Activated B cell treated with CpG ODN at 0.5 μM for 24 hours (primary cell): ENCODE measurements at regions of chr7 and their contacts with region 1.

Region 1: DNA sequence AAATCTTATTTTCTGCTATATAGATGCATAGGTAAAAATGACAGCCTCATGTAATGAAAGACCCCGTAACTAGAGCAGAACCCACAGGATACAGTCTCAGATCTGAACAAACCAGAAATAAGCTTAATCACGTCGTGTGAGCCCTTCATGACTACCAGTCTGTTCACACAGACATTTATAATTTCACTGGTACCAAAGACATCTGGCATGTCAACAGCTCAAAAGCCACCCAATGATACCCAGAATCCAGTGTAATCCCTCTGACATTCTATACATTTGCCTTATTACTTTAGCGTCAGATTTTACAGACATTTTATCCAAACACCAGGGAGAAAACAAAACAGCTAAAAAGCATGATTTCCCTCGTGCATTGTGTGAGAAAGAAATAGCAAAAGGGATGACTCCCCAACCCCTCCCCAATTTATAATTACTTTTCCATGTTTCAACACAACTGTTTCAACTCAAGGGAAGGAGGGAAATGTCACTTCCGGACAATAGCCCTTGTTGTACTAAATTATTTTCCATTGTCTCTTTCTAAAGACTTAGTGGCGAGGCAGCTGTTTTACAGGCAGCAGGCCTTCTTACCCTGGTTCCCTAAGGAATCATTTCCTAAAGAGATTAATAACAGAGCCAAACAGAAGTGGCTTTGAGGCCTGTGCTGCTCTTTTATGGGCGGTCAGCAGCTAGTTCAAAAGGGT is 33.2 kb downstream of the DOCK4 start:
- DNase-seq: no peak
- ATAC-seq: no peak
- H3K4me3 Mint-ChIP-seq: no peak overlapping the region
- H3K27ac Mint-ChIP-seq: no peak overlapping the region
- H3K4me1 Mint-ChIP-seq: no peaks in the 10 kb centered on the region
- H3K27me3 Mint-ChIP-seq: peaks cover 16% of the 10 kb centered on the region
- CTCF ChIP-seq: no peak

Region 2: DNA sequence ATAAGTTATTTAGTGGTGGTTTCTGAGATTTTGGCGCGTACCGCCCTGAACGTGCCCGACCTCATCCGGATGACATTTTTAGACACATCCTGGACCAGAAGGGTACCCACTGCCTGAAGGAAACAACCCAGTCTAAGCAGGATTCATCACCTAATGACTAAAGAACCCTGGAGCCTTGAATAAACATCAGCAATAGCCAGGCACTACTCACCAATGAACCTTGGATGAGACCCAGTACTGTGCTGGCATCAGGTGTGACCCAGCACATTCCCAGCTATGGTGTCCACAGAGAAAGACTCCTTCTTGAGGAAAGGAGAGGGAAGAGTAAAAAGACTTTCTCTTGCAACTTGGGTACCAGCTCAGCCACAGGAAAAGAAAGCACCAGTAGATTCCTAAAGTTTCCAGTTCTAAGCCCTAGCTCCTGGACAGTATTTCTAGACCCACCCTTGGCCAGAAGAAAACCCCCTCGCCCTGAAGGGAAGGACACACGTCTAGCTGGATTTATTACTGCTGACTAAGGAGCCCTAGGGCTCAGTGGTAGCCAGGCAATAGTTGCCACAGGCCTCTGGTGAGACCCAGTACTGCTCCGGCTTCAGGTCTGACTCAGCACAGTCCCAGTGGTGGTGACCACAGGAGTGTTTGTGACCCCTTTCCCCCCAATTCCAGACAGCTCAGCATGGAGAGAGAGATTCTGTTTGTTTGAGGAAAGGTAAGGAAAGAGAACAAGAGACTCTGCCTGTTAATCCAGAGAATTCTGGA is 66.0 kb after region 1 on chr7:
- CTCF ChIA-PET with region 1: no interaction called
- POLR2A ChIA-PET with region 1: no interaction called
- intact Hi-C with region 1: loop called (anchors 10 kb)
- DNase-seq: no peak
- ATAC-seq: no peak
- H3K4me3 Mint-ChIP-seq: no peak overlapping the region
- H3K27ac Mint-ChIP-seq: no peak overlapping the region
- H3K4me1 Mint-ChIP-seq: no peaks in the 10 kb centered on the region
- H3K27me3 Mint-ChIP-seq: no peaks in the 10 kb centered on the region
- CTCF ChIP-seq: no peak

Region 3: DNA sequence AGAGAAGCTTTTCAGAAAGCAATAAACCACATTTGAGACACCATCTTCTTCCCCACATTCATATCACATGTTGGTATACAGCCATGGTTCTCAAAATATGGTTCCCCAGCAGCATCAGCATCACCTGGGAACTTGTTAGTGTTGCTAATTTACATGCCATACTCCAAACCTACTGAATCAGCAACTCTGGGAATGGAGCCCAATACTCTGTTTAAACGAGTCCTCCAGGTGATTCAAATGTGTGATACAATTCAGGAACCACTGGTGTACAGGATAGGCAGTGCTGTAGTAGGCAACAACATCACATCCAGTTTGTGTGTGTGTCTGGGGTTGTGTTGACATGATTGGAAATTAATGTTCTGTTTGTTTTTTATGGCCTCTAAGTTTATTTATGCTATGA is 81.1 kb after region 1 on chr7:
- CTCF ChIA-PET with region 1: no interaction called
- POLR2A ChIA-PET with region 1: no interaction called
- intact Hi-C with region 1: no loop called
- DNase-seq: no peak
- ATAC-seq: no peak
- H3K4me3 Mint-ChIP-seq: no peak overlapping the region
- H3K27ac Mint-ChIP-seq: no peak overlapping the region
- H3K4me1 Mint-ChIP-seq: peaks cover 26% of the 10 kb centered on the region
- H3K27me3 Mint-ChIP-seq: no peaks in the 10 kb centered on the region
- CTCF ChIP-seq: no peak